Caco-2 (cell line): ENCODE measurements at regions of chr3 and their contacts with region 1.

Region 1: DNA sequence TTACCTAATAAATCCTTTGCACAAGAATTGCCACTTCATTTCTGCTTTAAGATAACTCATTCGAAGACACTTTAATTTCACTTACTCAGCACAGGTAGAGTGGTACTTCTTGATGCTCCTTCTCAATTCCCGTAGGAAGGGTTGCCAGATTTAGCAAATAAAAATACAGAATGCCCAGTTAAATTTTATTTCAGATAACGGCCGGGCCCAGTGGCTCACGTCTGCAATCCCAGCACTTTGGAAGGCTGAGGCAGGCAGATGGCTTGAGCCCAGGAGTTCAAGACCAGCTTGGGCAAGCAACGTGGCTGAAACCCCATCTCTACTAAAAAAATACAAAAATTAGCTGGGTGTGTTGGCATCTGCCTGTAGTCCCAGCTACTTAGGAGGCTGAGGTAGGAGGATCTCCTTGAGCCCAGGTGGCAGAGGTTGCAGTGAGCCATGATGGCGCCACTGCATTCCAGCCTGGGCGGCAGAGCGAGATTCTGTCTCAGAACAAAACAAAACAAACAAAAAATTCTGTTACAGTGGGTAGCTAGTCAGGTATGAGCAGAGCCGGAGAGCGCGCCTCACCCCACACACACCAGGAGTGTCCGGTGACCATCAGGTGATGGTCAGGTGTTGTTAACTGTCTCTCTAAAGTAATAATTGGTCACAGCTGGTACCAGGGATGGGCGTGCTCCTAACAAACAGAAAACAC is 92.8 kb downstream of the DNAH12 start:
- DNase-seq: peak; percentile 17 to 48
- H3K4me3 ChIP-seq: no peak overlapping the region
- H3K4me3 Mint-ChIP-seq: peak overlapping the region; percentile 62
- H3K27ac Mint-ChIP-seq: peak overlapping the region; percentile 48
- H3K4me1 ChIP-seq: peaks cover 38% of the 10 kb centered on the region
- H3K4me1 Mint-ChIP-seq: peaks cover 24% of the 10 kb centered on the region
- H3K27me3 ChIP-seq: no peaks in the 10 kb centered on the region
- H3K27me3 Mint-ChIP-seq: no peaks in the 10 kb centered on the region
- CTCF ChIP-seq: no peak

Region 2: DNA sequence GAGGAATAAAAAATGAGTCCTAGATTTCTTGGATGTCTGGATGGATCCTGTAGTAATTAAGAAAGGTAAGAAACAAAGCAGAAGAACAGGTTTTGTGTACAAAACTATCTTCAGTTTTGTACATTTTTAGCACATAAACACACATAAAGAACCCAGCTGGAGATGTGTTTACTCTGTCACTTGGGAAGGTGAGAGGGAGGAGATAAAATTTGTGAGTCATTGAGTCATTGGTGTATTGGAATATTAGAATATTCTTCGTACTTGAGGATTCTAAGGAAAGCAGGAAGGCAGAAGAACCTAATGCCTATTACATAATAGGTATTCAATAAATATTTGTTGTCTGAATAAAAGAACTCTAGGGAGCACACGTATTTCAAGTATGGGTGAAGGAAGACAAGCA is 206.4 kb before region 1 on chr3:
- CTCF ChIA-PET with region 1: no interaction called
- POLR2A ChIA-PET with region 1: no interaction called
- intact Hi-C with region 1: no loop called
- DNase-seq: no peak
- H3K4me3 ChIP-seq: no peak overlapping the region
- H3K4me3 Mint-ChIP-seq: no peak overlapping the region
- H3K27ac Mint-ChIP-seq: no peak overlapping the region
- H3K4me1 ChIP-seq: peaks cover 12% of the 10 kb centered on the region
- H3K4me1 Mint-ChIP-seq: peaks cover 15% of the 10 kb centered on the region
- H3K27me3 ChIP-seq: no peaks in the 10 kb centered on the region
- H3K27me3 Mint-ChIP-seq: no peaks in the 10 kb centered on the region
- CTCF ChIP-seq: no peak

Region 3: DNA sequence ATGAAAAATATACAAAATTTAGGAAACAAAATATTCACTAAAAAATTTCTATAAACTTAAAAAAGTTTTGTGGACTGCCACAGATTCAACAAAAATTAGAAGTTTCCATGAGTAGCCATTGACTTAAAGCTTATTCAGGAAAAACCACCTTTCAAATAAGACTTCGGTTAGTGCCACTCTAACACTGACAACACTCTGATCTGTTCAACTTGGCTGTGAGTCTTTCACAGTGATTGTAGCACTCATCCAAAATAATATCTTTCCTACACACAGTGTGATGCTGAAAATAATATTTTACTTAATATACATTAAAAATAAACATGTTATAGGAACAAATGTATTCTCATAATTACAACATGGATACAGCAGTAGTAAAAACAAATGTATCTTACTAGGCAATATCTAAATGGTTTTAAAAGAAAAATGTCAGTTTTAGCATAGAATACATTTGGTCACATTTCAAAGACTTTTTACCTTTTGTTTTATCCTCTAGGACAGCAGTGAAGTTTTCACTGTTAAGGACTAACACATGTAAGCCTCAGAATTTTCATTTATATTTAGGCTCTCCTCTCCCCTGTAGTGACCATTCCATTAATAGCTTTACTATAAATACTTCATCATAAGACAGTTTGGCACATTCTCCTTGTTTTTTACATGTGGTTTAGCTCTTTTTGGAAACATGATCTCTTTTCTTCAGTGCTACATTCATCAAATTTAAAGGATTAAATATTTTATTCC is 159.0 kb before region 1 on chr3 and contains the start of gene ASB14:
- CTCF ChIA-PET with region 1: no interaction called
- POLR2A ChIA-PET with region 1: no interaction called
- intact Hi-C with region 1: no loop called
- DNase-seq: no peak
- H3K4me3 ChIP-seq: no peak within 1 kb of the TSS
- H3K4me3 Mint-ChIP-seq: no peak within 1 kb of the TSS
- H3K27ac Mint-ChIP-seq: no peak within 1 kb of the TSS
- H3K4me1 ChIP-seq: no peaks in the 10 kb centered on the region
- H3K4me1 Mint-ChIP-seq: no peaks in the 10 kb centered on the region
- H3K27me3 ChIP-seq: no peaks in the 10 kb centered on the region
- H3K27me3 Mint-ChIP-seq: no peaks in the 10 kb centered on the region
- CTCF ChIP-seq: no peak
- total RNA-seq, gene ASB14: not detected in 2 replicates

Region 4: GRCh38 chr3:57397175-57398026 is 53.9 kb before region 1 on chr3:
- CTCF ChIA-PET with region 1: no interaction called
- POLR2A ChIA-PET with region 1: no interaction called
- intact Hi-C with region 1: loop called (anchors 5 kb)
- DNase-seq: peak; percentile 76 to 78
- H3K4me3 ChIP-seq: no peak overlapping the region
- H3K4me3 Mint-ChIP-seq: no peak overlapping the region
- H3K27ac Mint-ChIP-seq: no peak overlapping the region
- H3K4me1 ChIP-seq: no peaks in the 10 kb centered on the region; the same call in 1 of the 2 replicates
- H3K4me1 Mint-ChIP-seq: no peaks in the 10 kb centered on the region
- H3K27me3 ChIP-seq: no peaks in the 10 kb centered on the region
- H3K27me3 Mint-ChIP-seq: no peaks in the 10 kb centered on the region
- CTCF ChIP-seq: peak; percentile 87 to 93

Region 5: DNA sequence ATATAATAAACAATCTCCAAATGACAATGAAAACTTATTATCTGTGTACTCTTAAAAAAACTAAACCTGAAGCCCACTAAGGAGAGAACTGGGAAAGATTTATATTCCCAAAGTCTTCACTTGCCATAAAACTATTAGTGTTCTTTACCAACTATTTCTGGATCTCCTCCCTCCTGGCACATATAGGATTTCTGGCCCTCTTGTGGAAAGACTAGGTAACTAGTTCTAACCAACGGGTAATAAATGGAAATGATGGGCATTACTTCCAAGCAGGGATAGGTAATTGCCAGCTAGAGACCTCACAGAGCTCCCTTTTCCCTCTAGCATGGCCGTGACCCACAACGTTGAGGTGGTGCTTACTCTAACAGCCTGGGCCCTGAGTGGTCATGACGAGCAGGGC is 17.3 kb before region 1 on chr3:
- CTCF ChIA-PET with region 1: no interaction called
- POLR2A ChIA-PET with region 1: no interaction called
- intact Hi-C with region 1: loop called (anchors 1 kb)
- DNase-seq: peak in 1 of 2 experiments; percentile 50
- H3K4me3 ChIP-seq: no peak overlapping the region
- H3K4me3 Mint-ChIP-seq: no peak overlapping the region
- H3K27ac Mint-ChIP-seq: no peak overlapping the region
- H3K4me1 ChIP-seq: peaks cover 39% of the 10 kb centered on the region
- H3K4me1 Mint-ChIP-seq: peaks cover 23% of the 10 kb centered on the region
- H3K27me3 ChIP-seq: no peaks in the 10 kb centered on the region
- H3K27me3 Mint-ChIP-seq: no peaks in the 10 kb centered on the region
- CTCF ChIP-seq: peak; percentile 39 to 68

Region 6: GRCh38 chr3:57500506-57500905 is 49.2 kb after region 1 on chr3:
- CTCF ChIA-PET with region 1: no interaction called
- POLR2A ChIA-PET with region 1: interaction called, 3 read pairs
- intact Hi-C with region 1: loop called (anchors 2 kb)
- DNase-seq: peak; percentile 38 to 42
- H3K4me3 ChIP-seq: no peak overlapping the region
- H3K4me3 Mint-ChIP-seq: no peak overlapping the region
- H3K27ac Mint-ChIP-seq: peak overlapping the region; percentile 10
- H3K4me1 ChIP-seq: 0 out of 2 replicates have a peak, but pooled peaks cover 9% of the 10 kb centered on the region
- H3K4me1 Mint-ChIP-seq: peaks cover 7% of the 10 kb centered on the region
- H3K27me3 ChIP-seq: no peaks in the 10 kb centered on the region
- H3K27me3 Mint-ChIP-seq: no peaks in the 10 kb centered on the region
- CTCF ChIP-seq: no peak

Region 7: DNA sequence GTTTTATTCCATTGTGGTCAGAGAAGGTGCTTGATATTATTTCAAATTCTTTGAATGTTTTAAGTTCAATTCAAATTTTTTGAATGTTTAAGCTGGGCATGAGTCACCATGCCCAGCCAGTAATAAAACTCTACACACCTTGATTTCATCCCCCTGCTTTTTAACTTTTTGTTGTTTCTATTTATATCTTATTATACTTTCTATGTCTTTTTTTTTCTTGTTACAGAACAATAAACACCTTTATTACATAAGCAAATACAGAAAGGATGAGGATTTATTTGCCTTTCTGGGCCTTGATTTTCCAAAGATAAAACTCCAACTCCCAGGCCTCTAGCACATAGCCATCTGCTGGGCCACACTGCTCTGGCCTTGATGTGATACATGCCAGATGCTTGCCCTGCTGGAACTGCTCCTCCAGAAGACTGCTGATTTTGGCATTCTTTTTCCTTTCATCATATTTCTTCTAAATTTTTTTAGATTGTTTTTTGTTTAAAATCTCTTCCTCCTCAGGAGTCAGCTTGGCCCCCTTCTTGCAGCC is 78.8 kb after region 1 on chr3:
- CTCF ChIA-PET with region 1: no interaction called
- POLR2A ChIA-PET with region 1: no interaction called
- intact Hi-C with region 1: loop called (anchors 5 kb)
- DNase-seq: no peak
- H3K4me3 ChIP-seq: no peak overlapping the region
- H3K4me3 Mint-ChIP-seq: no peak overlapping the region
- H3K27ac Mint-ChIP-seq: peak overlapping the region; percentile 13
- H3K4me1 ChIP-seq: peaks cover 25% of the 10 kb centered on the region
- H3K4me1 Mint-ChIP-seq: peaks cover 36% of the 10 kb centered on the region
- H3K27me3 ChIP-seq: no peaks in the 10 kb centered on the region
- H3K27me3 Mint-ChIP-seq: no peaks in the 10 kb centered on the region
- CTCF ChIP-seq: no peak

Region 8: GRCh38 chr3:57555738-57556458 is 104.6 kb after region 1 on chr3 and contains the start of gene PDE12:
- CTCF ChIA-PET with region 1: no interaction called
- POLR2A ChIA-PET with region 1: interaction called, 4 read pairs
- intact Hi-C with region 1: loop called (anchors 5 kb)
- DNase-seq: peak; percentile 92 to 94
- H3K4me3 ChIP-seq: peak within 1 kb of the TSS; percentile 71
- H3K4me3 Mint-ChIP-seq: peak within 1 kb of the TSS; percentile 66
- H3K27ac Mint-ChIP-seq: peak within 1 kb of the TSS; percentile 89
- H3K4me1 ChIP-seq: peaks cover 4% of the 10 kb centered on the region; the same call in 1 of the 2 replicates
- H3K4me1 Mint-ChIP-seq: no peaks in the 10 kb centered on the region
- H3K27me3 ChIP-seq: no peaks in the 10 kb centered on the region
- H3K27me3 Mint-ChIP-seq: no peaks in the 10 kb centered on the region
- CTCF ChIP-seq: no peak
- total RNA-seq, gene PDE12: 22.1 and 23.2 TPM in 2 replicates

Region 9: DNA sequence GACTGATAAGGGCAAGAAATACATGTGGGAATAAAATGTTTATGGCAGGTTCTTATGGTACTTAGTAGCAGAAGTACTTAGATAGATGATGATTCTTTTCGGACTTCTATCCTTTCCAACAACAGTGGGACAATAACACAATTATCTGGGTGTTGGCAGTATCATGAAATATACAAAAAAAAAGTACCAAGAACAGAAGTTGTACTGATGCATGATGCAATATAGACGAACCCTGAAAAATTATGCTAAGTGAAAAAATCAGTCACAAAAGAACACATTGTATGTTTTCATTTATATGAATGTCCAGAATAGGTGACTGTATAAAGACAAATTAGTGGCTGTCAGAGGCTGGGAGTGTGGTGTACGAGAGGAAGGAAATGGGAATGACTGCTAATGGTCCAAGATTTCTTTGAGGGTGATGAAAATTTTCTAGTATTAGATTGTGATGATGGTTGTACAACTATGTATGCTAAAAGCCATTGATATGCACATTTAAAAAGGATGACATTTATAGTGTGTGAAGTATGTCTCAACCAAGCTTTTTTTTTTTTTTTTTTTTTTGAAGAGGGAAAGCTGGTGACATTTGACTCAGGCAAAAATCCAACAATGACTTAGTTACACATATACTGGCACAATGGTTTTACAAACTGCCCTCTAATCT is 124.8 kb after region 1 on chr3:
- CTCF ChIA-PET with region 1: no interaction called
- POLR2A ChIA-PET with region 1: no interaction called
- intact Hi-C with region 1: no loop called
- DNase-seq: no peak
- H3K4me3 ChIP-seq: no peak overlapping the region
- H3K4me3 Mint-ChIP-seq: no peak overlapping the region
- H3K27ac Mint-ChIP-seq: no peak overlapping the region
- H3K4me1 ChIP-seq: peaks cover 22% of the 10 kb centered on the region
- H3K4me1 Mint-ChIP-seq: peaks cover 14% of the 10 kb centered on the region
- H3K27me3 ChIP-seq: no peaks in the 10 kb centered on the region
- H3K27me3 Mint-ChIP-seq: no peaks in the 10 kb centered on the region
- CTCF ChIP-seq: no peak

Region 10: DNA sequence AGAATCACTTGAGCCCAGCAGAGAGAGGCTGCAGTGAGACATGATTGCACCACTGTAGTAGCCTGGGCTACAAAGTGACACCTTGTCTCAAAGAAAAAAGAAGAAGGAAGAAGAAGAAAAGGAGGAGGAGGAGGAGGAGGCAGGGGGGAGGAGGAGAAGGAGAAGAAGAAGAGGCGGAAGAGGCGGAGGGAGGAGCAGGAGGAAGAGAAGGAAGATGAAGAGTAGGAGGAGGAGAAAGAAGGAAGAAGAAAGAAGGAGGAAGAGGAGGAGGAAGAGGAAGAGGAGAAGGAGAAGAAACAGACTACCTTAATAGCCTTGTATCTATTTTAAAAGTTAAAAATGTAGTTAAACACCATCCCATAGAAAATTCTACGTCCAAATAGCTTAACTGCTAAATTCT is 164.9 kb after region 1 on chr3:
- CTCF ChIA-PET with region 1: no interaction called
- POLR2A ChIA-PET with region 1: no interaction called
- intact Hi-C with region 1: no loop called
- DNase-seq: no peak
- H3K4me3 ChIP-seq: no peak overlapping the region
- H3K4me3 Mint-ChIP-seq: no peak overlapping the region
- H3K27ac Mint-ChIP-seq: no peak overlapping the region
- H3K4me1 ChIP-seq: no peaks in the 10 kb centered on the region
- H3K4me1 Mint-ChIP-seq: no peaks in the 10 kb centered on the region
- H3K27me3 ChIP-seq: no peaks in the 10 kb centered on the region
- H3K27me3 Mint-ChIP-seq: no peaks in the 10 kb centered on the region
- CTCF ChIP-seq: no peak